ENCODE measurements at regions of chr7 and their contacts with region 1.

Region 1: DNA sequence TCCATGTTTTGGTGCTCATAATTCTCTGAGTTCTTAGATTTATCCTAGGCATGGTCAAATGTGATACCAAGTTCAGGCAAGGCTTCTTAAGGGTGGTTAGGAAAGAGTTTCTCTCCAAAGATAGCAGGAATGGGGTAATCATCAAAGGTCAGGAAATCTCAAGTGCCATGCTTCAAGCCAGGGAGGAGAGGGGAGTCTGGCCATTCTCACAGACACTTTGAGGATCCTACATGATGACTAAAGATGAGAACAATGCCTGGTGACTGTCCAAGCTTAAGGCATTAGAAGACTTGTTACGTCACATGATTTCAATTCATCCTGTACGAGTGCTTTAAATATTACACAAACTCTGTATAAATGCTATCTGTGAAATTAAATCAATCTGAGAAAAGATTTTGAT is 59.4 kb downstream of the POM121L12 start:
- DNase-seq: no peak
- H3K4me3 ChIP-seq: no peak overlapping the region
- H3K27ac ChIP-seq: no peak overlapping the region
- H3K4me1 ChIP-seq: no peaks in the 10 kb centered on the region
- H3K27me3 ChIP-seq: no peaks in the 10 kb centered on the region
- CTCF ChIP-seq: no peak
- POLR2A ChIP-seq: no peak

Region 2: DNA sequence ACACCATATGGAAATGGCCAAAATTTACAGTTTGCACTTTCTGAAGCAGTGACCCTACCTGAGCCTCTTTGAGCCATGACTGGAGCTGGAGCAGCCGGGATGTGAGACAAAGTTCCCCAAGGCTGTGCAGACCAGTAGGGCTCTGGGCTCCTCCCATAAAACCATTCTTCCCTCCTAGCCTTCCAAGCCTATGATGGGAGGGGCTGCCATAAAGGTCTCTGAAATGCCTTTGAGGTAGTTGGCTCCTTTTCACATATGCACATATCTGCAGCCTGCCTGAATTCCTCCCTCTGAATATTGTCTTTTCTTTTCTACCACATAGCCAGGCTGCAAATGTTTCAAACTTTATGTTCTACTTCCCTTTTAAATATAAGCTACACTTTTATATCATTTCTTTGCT is 576.0 kb before region 1 on chr7:
- intact Hi-C with region 1: loop called (anchors 10 kb)
- DNase-seq: no peak
- H3K4me3 ChIP-seq: no peak overlapping the region
- H3K27ac ChIP-seq: no peak overlapping the region
- H3K4me1 ChIP-seq: no peaks in the 10 kb centered on the region
- H3K27me3 ChIP-seq: no peaks in the 10 kb centered on the region
- CTCF ChIP-seq: no peak
- POLR2A ChIP-seq: no peak

Region 3: GRCh38 chr7:53022893-53023292 is 71.9 kb before region 1 on chr7:
- intact Hi-C with region 1: no loop called
- DNase-seq: no peak
- H3K4me3 ChIP-seq: no peak overlapping the region
- H3K27ac ChIP-seq: no peak overlapping the region
- H3K4me1 ChIP-seq: no peaks in the 10 kb centered on the region
- H3K27me3 ChIP-seq: no peaks in the 10 kb centered on the region
- CTCF ChIP-seq: no peak
- POLR2A ChIP-seq: no peak